ENCODE measurements at regions of chr7 and their contacts with region 1.

Region 1: DNA sequence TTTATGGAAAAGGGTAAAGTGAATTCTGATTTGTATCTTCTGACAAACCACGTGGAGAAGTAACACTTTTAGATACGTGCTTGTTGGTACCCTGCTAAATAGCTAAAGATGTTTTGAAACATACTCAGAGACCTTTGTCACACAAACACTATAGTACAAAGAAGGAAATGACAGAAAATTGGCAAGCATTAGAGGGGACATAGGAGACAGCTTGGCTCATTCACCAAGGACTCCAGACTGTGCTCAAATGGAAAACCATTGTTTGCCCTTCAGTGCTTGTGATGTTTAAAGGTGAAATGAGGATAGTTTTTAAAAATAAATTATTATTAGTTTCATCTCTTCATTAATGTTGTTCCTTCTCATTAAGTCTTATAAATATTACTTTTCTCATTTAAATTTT is 34.0 kb upstream of the CD36 start:
- DNase-seq: no peak
- ATAC-seq: peak; percentile 80 to 89

Region 2: GRCh38 chr7:80637911-80638765 is 33.7 kb after region 1 on chr7 and contains the start of gene CD36:
- intact Hi-C with region 1: loop called in 1 of 2 experiments (anchors 5 kb)
- DNase-seq: no peak
- ATAC-seq: peak; percentile 78 to 79
- total RNA-seq, gene CD36: 760 to 831 TPM